ENCODE measurements at regions of chr5 and their contacts with region 1.

Region 1: GRCh38 chr5:13957032-13957645 is 12.7 kb upstream of the DNAH5 start:
- DNase-seq: peak in 1 of 2 experiments; percentile 51
- H3K4me3 ChIP-seq: no peak overlapping the region
- H3K27ac ChIP-seq: no peak overlapping the region
- H3K4me1 ChIP-seq: peaks cover 11% of the 10 kb centered on the region
- H3K27me3 ChIP-seq: no peaks in the 10 kb centered on the region
- CTCF ChIP-seq: peak; percentile 89

Region 2: DNA sequence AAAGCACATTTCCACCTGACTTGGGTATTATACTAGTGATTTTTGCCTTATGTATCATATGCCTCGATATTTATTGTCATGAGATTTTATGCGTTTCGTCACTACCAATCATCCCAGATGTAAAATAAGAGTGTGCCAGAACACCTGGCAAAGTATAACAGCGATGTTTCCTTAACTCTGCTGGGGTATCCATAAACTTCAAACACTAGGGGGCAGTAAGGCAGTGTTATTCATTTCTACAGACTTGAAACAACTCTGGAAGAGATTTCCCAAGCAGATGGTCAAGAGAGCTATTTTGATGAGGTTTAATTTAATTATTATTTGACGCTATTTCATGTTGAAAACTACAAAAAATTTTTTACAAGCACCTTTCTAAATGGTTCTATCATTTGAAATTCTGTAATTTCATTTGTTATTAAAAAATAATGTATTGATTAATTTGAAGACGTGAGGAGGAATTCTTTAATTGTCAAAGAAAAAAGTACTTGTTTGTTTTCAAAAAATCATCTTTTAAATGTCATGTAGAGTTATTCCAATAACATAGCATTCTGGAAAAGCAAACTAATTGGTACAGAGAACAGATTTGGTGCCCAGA is 1664.4 kb before region 1 on chr5:
- CTCF ChIA-PET with region 1: no interaction called
- POLR2A ChIA-PET with region 1: no interaction called
- intact Hi-C with region 1: loop called (anchors 2 kb)
- DNase-seq: no peak
- H3K4me3 ChIP-seq: no peak overlapping the region
- H3K27ac ChIP-seq: no peak overlapping the region
- H3K4me1 ChIP-seq: no peaks in the 10 kb centered on the region
- H3K27me3 ChIP-seq: no peaks in the 10 kb centered on the region
- CTCF ChIP-seq: peak; percentile 72

Region 3: GRCh38 chr5:13250450-13251291 is 706.5 kb before region 1 on chr5:
- CTCF ChIA-PET with region 1: no interaction called
- POLR2A ChIA-PET with region 1: no interaction called
- intact Hi-C with region 1: loop called (anchors 10 kb)
- DNase-seq: no peak
- H3K4me3 ChIP-seq: no peak overlapping the region
- H3K27ac ChIP-seq: no peak overlapping the region
- H3K4me1 ChIP-seq: no peaks in the 10 kb centered on the region
- H3K27me3 ChIP-seq: no peaks in the 10 kb centered on the region
- CTCF ChIP-seq: peak; percentile 83

Region 4: GRCh38 chr5:13831351-13831750 is 125.8 kb before region 1 on chr5:
- CTCF ChIA-PET with region 1: no interaction called
- POLR2A ChIA-PET with region 1: no interaction called
- intact Hi-C with region 1: loop called (anchors 5 kb)
- DNase-seq: no peak
- H3K4me3 ChIP-seq: no peak overlapping the region
- H3K27ac ChIP-seq: no peak overlapping the region
- H3K4me1 ChIP-seq: no peaks in the 10 kb centered on the region
- H3K27me3 ChIP-seq: no peaks in the 10 kb centered on the region
- CTCF ChIP-seq: peak; percentile 47

Region 5: DNA sequence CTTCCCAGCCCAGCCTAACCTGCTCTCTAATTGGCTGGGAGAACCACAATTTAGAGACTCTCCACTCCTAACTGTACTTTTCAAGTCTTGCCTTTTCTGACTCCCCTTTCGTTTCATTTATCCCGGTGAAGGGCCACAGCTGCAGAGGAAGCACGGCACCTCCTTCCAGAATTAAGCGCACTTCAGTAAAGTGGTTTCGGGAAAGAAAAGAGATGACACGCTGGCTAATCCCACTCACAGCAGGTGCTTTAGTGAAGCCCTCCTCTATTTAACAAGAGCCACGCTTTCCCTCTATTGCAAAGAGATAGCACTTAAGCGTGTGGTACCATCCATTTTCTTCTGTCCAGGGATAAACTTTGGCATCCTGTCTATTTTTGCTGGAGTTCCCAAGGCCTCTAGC is 17.5 kb before region 1 on chr5:
- CTCF ChIA-PET with region 1: no interaction called
- POLR2A ChIA-PET with region 1: no interaction called
- intact Hi-C with region 1: no loop called
- DNase-seq: no peak
- H3K4me3 ChIP-seq: no peak overlapping the region
- H3K27ac ChIP-seq: no peak overlapping the region
- H3K4me1 ChIP-seq: no peaks in the 10 kb centered on the region
- H3K27me3 ChIP-seq: no peaks in the 10 kb centered on the region
- CTCF ChIP-seq: no peak

Region 6: DNA sequence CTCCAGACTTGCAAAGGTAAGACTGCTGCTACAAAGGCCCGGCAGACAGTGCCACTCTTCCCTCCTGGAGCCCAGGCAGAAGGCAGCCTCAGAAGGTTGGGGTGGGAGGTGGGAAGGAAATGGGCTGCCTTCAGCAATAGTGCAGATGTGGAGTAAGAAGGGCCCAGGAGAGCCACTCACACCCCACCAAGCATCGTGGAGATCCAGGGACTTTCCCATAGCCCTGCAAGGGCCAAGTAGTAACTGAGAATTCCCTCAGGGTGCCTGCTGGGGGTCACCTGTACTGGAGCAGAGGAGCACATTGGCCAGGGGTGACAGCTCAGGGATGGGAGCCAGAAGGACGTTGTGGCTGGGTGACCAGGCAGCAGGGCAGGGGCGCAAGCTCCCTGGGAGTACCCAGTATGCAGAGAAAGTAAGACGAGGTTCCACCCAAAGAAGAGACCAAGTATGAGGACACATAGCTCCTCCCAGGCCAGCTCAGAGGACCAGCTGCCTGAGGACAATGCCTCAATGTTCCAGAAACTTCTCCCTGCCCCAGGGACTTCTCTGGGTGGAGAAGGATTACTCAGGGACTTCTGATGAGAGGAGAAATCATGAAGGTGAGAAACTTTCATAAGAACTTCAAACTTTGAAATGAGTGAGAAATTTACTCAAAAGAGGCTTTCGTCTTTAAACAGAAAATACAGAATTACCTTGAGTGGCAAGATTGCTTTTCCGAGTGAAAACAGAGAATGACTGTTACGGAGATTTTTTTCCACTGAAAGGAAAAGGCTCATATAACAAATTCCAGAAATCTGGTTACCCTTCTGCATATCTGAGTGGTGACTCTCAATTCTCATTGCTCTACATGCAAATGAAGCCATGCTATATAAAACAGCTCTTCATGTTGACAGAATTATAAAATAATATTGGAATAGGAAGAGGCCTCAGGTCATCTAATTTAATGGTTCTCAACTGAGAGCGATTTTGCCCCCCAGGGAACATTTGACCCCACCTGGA is 98.1 kb after region 1 on chr5:
- CTCF ChIA-PET with region 1: no interaction called
- POLR2A ChIA-PET with region 1: no interaction called
- intact Hi-C with region 1: no loop called
- DNase-seq: no peak
- H3K4me3 ChIP-seq: no peak overlapping the region
- H3K27ac ChIP-seq: no peak overlapping the region
- H3K4me1 ChIP-seq: no peaks in the 10 kb centered on the region
- H3K27me3 ChIP-seq: no peaks in the 10 kb centered on the region
- CTCF ChIP-seq: no peak